ENCODE measurements at regions of chr11 and their contacts with region 1.

Region 1: DNA sequence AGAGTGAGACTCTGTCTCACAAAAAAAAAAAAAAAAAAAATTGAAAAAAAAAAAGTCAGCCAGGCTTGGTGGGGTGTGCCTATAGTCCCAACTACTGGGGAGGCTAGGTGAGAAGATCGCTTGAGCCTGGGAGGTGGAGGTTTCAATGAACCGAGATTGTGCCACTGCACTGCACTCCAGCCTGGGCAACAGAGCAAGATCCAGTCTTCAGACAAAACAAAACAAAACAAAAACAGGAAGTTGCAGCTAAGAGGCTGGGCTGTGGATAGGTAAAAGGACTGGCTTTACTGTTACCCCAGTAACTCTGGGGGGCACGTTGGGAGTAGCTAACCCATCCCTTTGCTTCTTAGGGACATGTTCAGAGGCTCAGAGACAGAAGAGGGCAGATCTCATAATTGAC is 6.3 kb upstream of the PC start:
- DNase-seq: no peak
- H3K4me3 ChIP-seq: no peak overlapping the region
- H3K27ac ChIP-seq: no peak overlapping the region
- H3K4me1 ChIP-seq: no peaks in the 10 kb centered on the region
- H3K27me3 ChIP-seq: no peaks in the 10 kb centered on the region
- CTCF ChIP-seq: no peak
- POLR2A ChIP-seq: no peak

Region 2: GRCh38 chr11:66800720-66801428 is 163.6 kb before region 1 on chr11:
- intact Hi-C with region 1: no loop called
- DNase-seq: no peak
- H3K4me3 ChIP-seq: no peak overlapping the region
- H3K27ac ChIP-seq: peak overlapping the region in 1 of 2 donors; percentile 36
- H3K4me1 ChIP-seq: no peaks in the 10 kb centered on the region
- H3K27me3 ChIP-seq: no peaks in the 10 kb centered on the region
- CTCF ChIP-seq: no peak
- POLR2A ChIP-seq: no peak

Region 3: GRCh38 chr11:66855574-66856495 is 108.7 kb before region 1 on chr11:
- intact Hi-C with region 1: loop called (anchors 5 kb)
- DNase-seq: peak; percentile 84
- H3K4me3 ChIP-seq: peak overlapping the region; percentile 37 to 57
- H3K27ac ChIP-seq: peak overlapping the region; percentile 72 to 80
- H3K4me1 ChIP-seq: no peaks in the 10 kb centered on the region
- H3K27me3 ChIP-seq: no peaks in the 10 kb centered on the region
- CTCF ChIP-seq: peak in 1 of 4 experiments; percentile 13
- POLR2A ChIP-seq: peak; percentile 52